Stomach (tissue), 19 donors: ENCODE measurements at regions of chr10 and their contacts with region 1.

Region 1: GRCh38 chr10:77846718-77847630 is 79.6 kb downstream of the DLG5 start:
- DNase-seq: peak; percentile 82 to 93
- H3K4me3 ChIP-seq: no peak overlapping the region
- H3K27ac ChIP-seq: peak overlapping the region in 4 of 5 donors; percentile 39 to 81 (median 69)
- H3K4me1 ChIP-seq: peaks cover 8 to 38% (median 21%) of the 10 kb centered on the region in 4 donors
- H3K27me3 ChIP-seq: no peaks in the 10 kb centered on the region
- CTCF ChIP-seq: peak in 6 of 7 experiments; percentile 83 to 99 (median 96)
- EP300 ChIP-seq: no peak
- POLR2A ChIP-seq: no peak

Region 2: GRCh38 chr10:77926566-77927401 is 79.8 kb after region 1 on chr10 and contains the start of gene DLG5:
- intact Hi-C with region 1: loop called (anchors 10 kb)
- DNase-seq: peak; percentile 67 to 88
- H3K4me3 ChIP-seq: peak within 1 kb of the TSS; percentile 63 to 82 (median 75)
- H3K27ac ChIP-seq: peak within 1 kb of the TSS; percentile 66 to 92 (median 83)
- H3K4me1 ChIP-seq: peaks cover 13 to 50% (median 36%) of the 10 kb centered on the region in 4 donors
- H3K27me3 ChIP-seq: peaks cover 0 to 30% (median 0%) of the 10 kb centered on the region in 3 donors
- CTCF ChIP-seq: no peak
- EP300 ChIP-seq: no peak
- POLR2A ChIP-seq: no peak
- total RNA-seq, gene DLG5: 32.3 to 134 (median 44.8) TPM

Region 3: DNA sequence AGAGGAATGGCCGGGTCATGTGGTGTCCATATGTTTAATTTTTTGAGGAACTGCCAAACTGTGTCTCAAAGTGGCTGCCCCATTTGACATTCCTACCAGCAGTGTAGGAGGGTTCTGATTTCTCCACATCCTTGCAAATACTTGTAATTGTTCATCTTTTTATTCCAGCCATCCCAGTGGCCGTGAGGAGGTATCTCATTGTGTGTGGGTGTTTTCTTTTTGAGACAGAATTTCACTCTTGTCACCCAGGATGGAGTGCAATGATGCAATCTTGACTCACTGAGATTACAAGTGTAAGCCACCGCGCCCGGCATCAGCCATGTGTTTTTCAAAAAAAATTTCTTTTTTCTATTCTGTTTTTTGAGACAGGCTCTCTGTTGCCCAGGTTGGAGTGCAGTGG is 118.3 kb after region 1 on chr10:
- intact Hi-C with region 1: loop called (anchors 10 kb)
- DNase-seq: no peak
- H3K4me3 ChIP-seq: no peak overlapping the region
- H3K27ac ChIP-seq: no peak overlapping the region
- H3K4me1 ChIP-seq: peaks cover 0 to 13% (median 3%) of the 10 kb centered on the region in 4 donors
- H3K27me3 ChIP-seq: no peaks in the 10 kb centered on the region
- CTCF ChIP-seq: no peak
- EP300 ChIP-seq: no peak
- POLR2A ChIP-seq: no peak

Region 4: DNA sequence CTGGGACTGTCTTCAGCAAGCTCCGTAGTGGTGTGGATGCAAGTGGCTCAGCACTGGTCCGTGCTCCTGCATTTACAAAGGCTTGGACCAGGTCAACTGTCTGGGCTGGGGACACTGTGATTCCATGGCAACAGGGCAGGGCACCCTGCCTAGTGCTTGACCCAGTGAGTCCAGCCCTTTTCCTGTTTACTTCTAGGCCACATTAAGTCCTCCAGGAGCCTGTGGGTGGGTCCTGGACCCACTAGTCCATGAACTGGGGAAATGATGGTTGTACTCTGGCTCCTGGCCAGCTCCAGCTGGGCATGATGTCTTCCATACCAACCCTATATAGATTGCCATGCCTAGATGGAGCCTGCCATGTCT is 338.7 kb after region 1 on chr10:
- intact Hi-C with region 1: no loop called
- DNase-seq: no peak
- H3K4me3 ChIP-seq: no peak overlapping the region
- H3K27ac ChIP-seq: no peak overlapping the region
- H3K4me1 ChIP-seq: peaks cover 0 to 8% (median 2%) of the 10 kb centered on the region in 4 donors
- H3K27me3 ChIP-seq: peaks cover 0 to 6% (median 0%) of the 10 kb centered on the region in 3 donors
- CTCF ChIP-seq: no peak
- EP300 ChIP-seq: no peak
- POLR2A ChIP-seq: no peak